IMR-90 (cell line): ENCODE measurements at regions of chr2 and their contacts with region 1.

Region 1: DNA sequence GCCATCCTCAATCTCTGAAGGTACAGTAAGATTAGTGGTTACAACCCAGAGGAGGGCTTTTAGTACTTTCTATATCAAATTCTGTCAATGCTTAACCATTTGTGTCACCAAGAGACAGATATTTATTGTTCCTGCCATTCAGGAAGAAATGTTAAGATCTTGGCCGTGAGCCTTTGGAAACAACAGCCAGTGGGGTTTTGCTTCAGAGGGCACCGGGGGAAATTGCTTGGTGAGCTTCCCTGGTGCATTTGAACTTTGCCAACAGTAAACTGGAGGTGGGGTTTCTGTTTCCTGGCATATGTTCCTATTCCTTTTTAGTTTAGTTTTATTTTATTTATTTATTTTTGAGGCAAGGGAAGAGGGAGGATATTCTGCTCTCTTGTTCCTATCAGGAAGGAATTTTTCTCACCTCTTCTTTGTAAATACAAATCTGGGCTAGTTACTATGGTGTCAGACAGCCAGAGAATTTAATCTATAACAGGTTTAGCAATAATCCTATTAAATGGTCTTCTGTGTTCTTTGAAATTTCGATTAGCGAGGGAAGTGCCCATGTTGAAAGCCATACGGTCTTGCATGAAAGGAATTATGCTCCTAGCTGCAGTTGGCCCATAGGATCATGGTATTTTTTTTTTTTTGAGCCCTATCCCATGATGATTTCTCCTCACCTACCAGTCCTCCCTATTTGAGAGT is 95.7 kb downstream of the MAIP1 start:
- DNase-seq: no peak
- ATAC-seq: no peak; the same call in 1 of the 2 replicates
- H3K4me3 ChIP-seq: no peak overlapping the region
- H3K27ac ChIP-seq: no peak overlapping the region
- H3K4me1 ChIP-seq: no peaks in the 10 kb centered on the region
- H3K27me3 ChIP-seq: peaks cover 1% of the 10 kb centered on the region
- CTCF ChIP-seq: no peak
- POLR2A ChIP-seq: no peak
- RAD21 ChIP-seq: no peak

Region 2: GRCh38 chr2:200012401-200012800 is 38.7 kb before region 1 on chr2:
- CTCF ChIA-PET with region 1: no interaction called
- POLR2A ChIA-PET with region 1: no interaction called
- dilution Hi-C with region 1: no loop called
- in situ Hi-C with region 1: no loop called
- intact Hi-C with region 1: loop called (anchors 1 kb)
- DNase-seq: no peak
- ATAC-seq: no peak
- H3K4me3 ChIP-seq: no peak overlapping the region
- H3K27ac ChIP-seq: no peak overlapping the region
- H3K4me1 ChIP-seq: no peaks in the 10 kb centered on the region
- H3K27me3 ChIP-seq: no peaks in the 10 kb centered on the region
- CTCF ChIP-seq: no peak
- POLR2A ChIP-seq: no peak
- RAD21 ChIP-seq: no peak

Region 3: GRCh38 chr2:200065477-200065876 is 14.4 kb after region 1 on chr2:
- CTCF ChIA-PET with region 1: no interaction called
- POLR2A ChIA-PET with region 1: no interaction called
- dilution Hi-C with region 1: no loop called
- in situ Hi-C with region 1: no loop called
- intact Hi-C with region 1: loop called (anchors 2 kb)
- DNase-seq: peak; percentile 35
- ATAC-seq: peak; percentile 81
- H3K4me3 ChIP-seq: no peak overlapping the region
- H3K27ac ChIP-seq: no peak overlapping the region; the same call in 1 of the 2 replicates
- H3K4me1 ChIP-seq: peaks cover 4% of the 10 kb centered on the region; the same call in 1 of the 2 replicates
- H3K27me3 ChIP-seq: no peaks in the 10 kb centered on the region; the same call in none of the 2 replicates
- CTCF ChIP-seq: no peak
- POLR2A ChIP-seq: no peak
- RAD21 ChIP-seq: no peak